IMR-90 (cell line): ENCODE measurements at regions of chr16 and their contacts with region 1.

Region 1: DNA sequence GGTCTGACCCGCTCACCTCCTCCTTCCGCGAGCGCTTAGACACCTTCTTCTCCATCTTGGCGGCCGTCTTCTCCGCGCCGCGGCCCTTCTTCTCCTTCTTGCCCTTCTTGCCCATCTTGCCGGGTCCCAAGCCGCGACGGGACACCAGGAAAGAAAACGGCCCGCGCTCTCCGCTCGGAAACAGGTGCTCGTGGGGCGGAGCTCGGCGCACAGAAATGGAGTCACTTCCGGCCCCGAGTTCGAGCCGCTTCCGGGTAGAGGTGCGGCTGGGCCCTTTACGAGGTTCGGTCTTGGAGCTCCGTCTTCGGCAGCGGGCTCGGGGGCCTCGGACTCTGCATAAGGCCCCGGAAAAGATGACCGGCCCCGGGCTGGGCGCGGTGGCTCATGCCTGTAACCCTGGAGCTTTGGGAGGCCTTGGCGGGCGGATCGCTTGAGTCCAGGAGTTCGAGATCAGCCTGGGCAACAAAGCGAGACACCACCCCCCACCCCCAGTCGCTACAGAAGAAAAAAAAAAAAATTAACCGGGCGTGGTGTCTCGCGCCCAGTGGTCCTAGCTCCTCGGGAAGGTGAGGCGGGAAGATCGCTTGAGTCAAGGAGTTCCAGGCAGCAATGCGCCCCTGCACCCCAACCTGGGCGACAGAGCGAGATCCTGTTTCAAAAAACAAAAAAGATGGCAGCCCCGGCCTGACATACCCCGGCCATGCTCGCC is at the start of gene KLHDC4:
- DNase-seq: peak; percentile 82
- ATAC-seq: peak; percentile 93
- H3K4me3 ChIP-seq: peak within 1 kb of the TSS; percentile 96
- H3K27ac ChIP-seq: peak within 1 kb of the TSS; percentile 81
- H3K4me1 ChIP-seq: peaks cover 3% of the 10 kb centered on the region; the same call in 1 of the 2 replicates
- H3K27me3 ChIP-seq: no peaks in the 10 kb centered on the region
- CTCF ChIP-seq: no peak
- POLR2A ChIP-seq: peak; percentile 82
- RAD21 ChIP-seq: no peak
- total RNA-seq, gene KLHDC4: 13.6 and 16.1 TPM in 2 replicates

Region 2: GRCh38 chr16:87416826-87417527 is 349.0 kb before region 1 on chr16:
- CTCF ChIA-PET with region 1: no interaction called
- POLR2A ChIA-PET with region 1: no interaction called
- dilution Hi-C with region 1: no loop called
- in situ Hi-C with region 1: loop called (anchors 25 kb)
- intact Hi-C with region 1: loop called (anchors 5 kb)
- DNase-seq: peak; percentile 72
- ATAC-seq: peak; percentile 65; the same call in 1 of the 2 replicates
- H3K4me3 ChIP-seq: no peak overlapping the region
- H3K27ac ChIP-seq: no peak overlapping the region
- H3K4me1 ChIP-seq: no peaks in the 10 kb centered on the region
- H3K27me3 ChIP-seq: no peaks in the 10 kb centered on the region
- CTCF ChIP-seq: peak; percentile 85
- POLR2A ChIP-seq: no peak
- RAD21 ChIP-seq: peak; percentile 85

Region 3: GRCh38 chr16:87581833-87582203 is 184.1 kb before region 1 on chr16:
- CTCF ChIA-PET with region 1: interaction called, 6 read pairs
- POLR2A ChIA-PET with region 1: no interaction called
- dilution Hi-C with region 1: no loop called
- in situ Hi-C with region 1: loop called (anchors 5 kb)
- intact Hi-C with region 1: no loop called
- DNase-seq: peak; percentile 98
- ATAC-seq: peak; percentile 90
- H3K4me3 ChIP-seq: no peak overlapping the region
- H3K27ac ChIP-seq: peak overlapping the region; percentile 94
- H3K4me1 ChIP-seq: peaks cover 26% of the 10 kb centered on the region
- H3K27me3 ChIP-seq: peaks cover 3% of the 10 kb centered on the region; the same call in 1 of the 2 replicates
- CTCF ChIP-seq: no peak
- POLR2A ChIP-seq: no peak
- RAD21 ChIP-seq: no peak

Region 4: GRCh38 chr16:88014252-88014781 is 248.4 kb after region 1 on chr16:
- CTCF ChIA-PET with region 1: no interaction called
- POLR2A ChIA-PET with region 1: no interaction called
- dilution Hi-C with region 1: no loop called
- in situ Hi-C with region 1: no loop called
- intact Hi-C with region 1: no loop called
- DNase-seq: peak; percentile 77
- ATAC-seq: peak; percentile 89
- H3K4me3 ChIP-seq: no peak overlapping the region
- H3K27ac ChIP-seq: peak overlapping the region; percentile 75
- H3K4me1 ChIP-seq: peaks cover 23% of the 10 kb centered on the region
- H3K27me3 ChIP-seq: no peaks in the 10 kb centered on the region
- CTCF ChIP-seq: no peak
- POLR2A ChIP-seq: no peak
- RAD21 ChIP-seq: no peak

Region 5: DNA sequence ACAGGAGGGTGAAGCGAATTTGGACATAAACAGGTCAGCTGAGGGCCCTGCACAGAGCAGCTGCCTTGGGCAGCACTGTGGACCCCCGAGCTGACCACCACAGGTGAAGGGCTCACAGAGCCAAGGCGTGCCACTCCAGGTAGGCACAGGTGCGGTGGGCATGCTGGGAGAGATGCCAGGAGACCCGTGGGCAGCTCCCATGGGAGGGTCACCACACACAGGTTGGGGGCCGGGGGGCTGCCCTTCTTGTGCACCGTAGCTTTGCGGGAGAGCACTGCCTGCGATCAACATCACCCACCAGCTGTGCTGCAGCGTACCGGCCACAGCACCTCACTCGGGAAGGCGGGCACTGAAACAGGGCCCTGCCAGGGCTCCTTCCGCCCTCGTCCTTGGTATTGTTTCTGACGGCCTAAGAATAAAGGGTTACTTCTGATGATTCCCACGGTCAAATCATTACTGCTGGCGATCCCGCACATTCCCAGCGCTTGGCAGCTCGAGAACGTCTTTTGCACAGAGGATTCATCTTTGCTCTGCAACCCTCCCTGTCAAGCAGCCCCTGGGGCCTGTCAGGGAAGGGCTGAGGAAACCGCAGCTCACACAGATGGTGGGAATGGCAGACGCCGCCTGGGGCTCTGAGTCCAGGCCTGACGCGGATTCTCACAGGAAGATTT is 367.0 kb after region 1 on chr16:
- CTCF ChIA-PET with region 1: no interaction called
- POLR2A ChIA-PET with region 1: no interaction called
- dilution Hi-C with region 1: no loop called
- in situ Hi-C with region 1: no loop called
- intact Hi-C with region 1: no loop called
- DNase-seq: no peak
- ATAC-seq: no peak
- H3K4me3 ChIP-seq: no peak overlapping the region
- H3K27ac ChIP-seq: no peak overlapping the region
- H3K4me1 ChIP-seq: peaks cover 4% of the 10 kb centered on the region
- H3K27me3 ChIP-seq: peaks cover 4% of the 10 kb centered on the region
- CTCF ChIP-seq: no peak
- POLR2A ChIP-seq: no peak
- RAD21 ChIP-seq: no peak